ENCODE measurements at regions of chr1 and their contacts with region 1.

Region 1: DNA sequence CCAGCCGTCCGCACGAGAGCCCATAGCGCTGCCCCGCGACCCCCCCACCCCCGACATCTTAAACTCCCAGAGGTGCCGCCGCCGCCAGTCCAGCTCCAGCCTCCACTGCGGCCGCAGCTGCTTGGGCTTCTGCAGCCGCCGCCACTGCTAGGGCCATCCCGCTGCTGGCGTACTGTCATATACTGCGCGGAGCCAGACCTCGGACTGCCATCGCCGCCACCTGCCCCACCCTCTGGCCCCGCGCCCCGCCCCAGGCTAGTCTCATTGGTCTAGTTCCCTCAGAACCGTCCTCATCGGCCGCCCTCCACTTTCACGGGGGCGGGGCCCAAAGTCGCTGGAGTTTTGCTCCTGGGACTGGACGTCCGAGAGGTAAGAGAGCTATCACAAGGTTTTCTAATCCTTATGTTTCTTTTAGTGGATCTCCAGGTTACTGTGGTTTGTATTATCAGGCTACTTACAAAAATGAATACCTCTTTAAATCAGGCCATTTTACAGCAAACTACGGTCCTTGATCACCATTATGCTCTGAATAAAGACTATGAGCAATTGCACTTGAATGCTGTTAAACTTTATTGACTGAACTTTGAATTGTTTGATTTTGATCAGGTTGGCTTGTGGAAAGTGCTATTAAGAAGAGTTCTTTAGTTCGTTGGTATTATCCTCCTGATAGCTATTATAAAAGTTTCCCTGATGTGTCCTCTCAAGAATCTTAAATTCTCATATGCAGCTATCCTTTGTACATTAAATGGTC is 2.8 kb upstream of the CD1D start:
- DNase-seq: peak; percentile 65
- ATAC-seq: peak; percentile 69
- H3K4me3 ChIP-seq: peak overlapping the region; percentile 39 to 62 (median 50)
- H3K4me3 Mint-ChIP-seq: peak overlapping the region; percentile 82
- H3K27ac ChIP-seq: peak overlapping the region; percentile 22 to 53
- H3K27ac Mint-ChIP-seq: peak overlapping the region; percentile 86
- H3K4me1 ChIP-seq: peaks cover 58 to 72% of the 10 kb centered on the region in 2 donors
- H3K4me1 Mint-ChIP-seq: peaks cover 73% of the 10 kb centered on the region
- H3K27me3 ChIP-seq: no peaks in the 10 kb centered on the region
- H3K27me3 Mint-ChIP-seq: no peaks in the 10 kb centered on the region
- CTCF ChIP-seq: no peak

Region 2: DNA sequence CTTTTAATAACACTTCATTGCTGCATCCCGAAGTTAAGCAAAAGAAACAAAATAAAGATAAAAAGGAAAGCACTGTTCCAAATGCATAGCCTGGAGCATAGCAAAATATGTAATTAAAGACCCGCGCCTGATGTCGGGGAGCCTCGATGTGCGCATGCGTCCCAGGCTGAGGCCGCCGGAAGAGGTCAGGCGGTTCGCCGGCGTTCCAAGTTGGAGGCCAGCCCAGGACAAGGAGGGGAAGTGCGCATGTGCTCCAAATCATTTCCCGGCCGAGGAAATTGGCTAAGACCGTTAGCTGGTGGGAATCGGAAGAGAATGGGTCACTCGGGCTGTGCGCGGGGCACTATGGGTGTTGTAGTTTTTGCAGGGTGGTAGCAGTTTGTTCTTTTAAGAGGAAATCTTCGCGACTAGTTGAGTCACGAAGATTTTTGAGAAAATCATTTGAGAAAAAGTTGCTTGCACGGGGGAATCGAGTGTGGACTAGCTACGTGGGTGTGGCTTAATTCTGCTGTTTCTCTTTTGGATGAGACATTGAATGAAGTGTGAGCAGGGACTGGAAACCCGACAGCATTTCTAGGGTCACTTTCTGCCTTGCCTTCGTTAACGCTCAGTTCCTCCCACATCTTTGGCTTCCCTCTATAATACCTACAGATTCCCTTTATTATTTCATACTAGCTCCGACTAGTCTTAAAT is 28.2 kb before region 1 on chr1:
- CTCF ChIA-PET with region 1: no interaction called
- POLR2A ChIA-PET with region 1: no interaction called
- intact Hi-C with region 1: loop called (anchors 1 kb)
- DNase-seq: peak; percentile 82
- ATAC-seq: peak; percentile 73
- H3K4me3 ChIP-seq: peak overlapping the region; percentile 53 to 81 (median 76)
- H3K4me3 Mint-ChIP-seq: peak overlapping the region; percentile 99
- H3K27ac ChIP-seq: peak overlapping the region; percentile 77 to 85
- H3K27ac Mint-ChIP-seq: peak overlapping the region; percentile 98
- H3K4me1 ChIP-seq: peaks cover 43 to 49% of the 10 kb centered on the region in 2 donors
- H3K4me1 Mint-ChIP-seq: peaks cover 58% of the 10 kb centered on the region
- H3K27me3 ChIP-seq: no peaks in the 10 kb centered on the region
- H3K27me3 Mint-ChIP-seq: no peaks in the 10 kb centered on the region
- CTCF ChIP-seq: no peak

Region 3: DNA sequence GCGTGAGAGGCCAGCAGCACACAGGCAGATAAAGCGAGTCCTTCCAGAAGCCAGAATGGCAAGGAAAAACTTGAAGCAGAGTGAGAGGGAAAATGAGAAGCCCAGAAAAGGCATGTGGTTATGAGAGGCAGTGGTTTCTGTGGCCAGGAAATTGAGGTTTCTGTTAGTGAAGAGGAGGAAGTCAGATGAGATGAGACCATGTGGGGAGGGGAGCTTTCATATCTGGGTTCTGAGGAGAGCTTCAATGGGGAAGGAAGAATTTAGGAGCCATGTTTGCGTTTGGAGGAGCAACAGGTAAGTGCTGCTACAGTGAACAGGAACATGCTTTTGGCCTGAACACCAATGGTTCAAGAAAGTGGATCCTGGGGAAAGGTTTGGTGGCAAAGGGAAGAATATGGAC is 70.2 kb after region 1 on chr1:
- CTCF ChIA-PET with region 1: interaction called, 5 read pairs
- POLR2A ChIA-PET with region 1: no interaction called
- intact Hi-C with region 1: loop called (anchors 5 kb)
- DNase-seq: peak; percentile 88
- ATAC-seq: peak; percentile 84
- H3K4me3 ChIP-seq: peak overlapping the region in 3 of 5 experiments; percentile 16 to 32 (median 26)
- H3K4me3 Mint-ChIP-seq: peak overlapping the region; percentile 49
- H3K27ac ChIP-seq: peak overlapping the region; percentile 40 to 63
- H3K27ac Mint-ChIP-seq: peak overlapping the region; percentile 57
- H3K4me1 ChIP-seq: peaks cover 49 to 51% of the 10 kb centered on the region in 2 donors
- H3K4me1 Mint-ChIP-seq: peaks cover 48% of the 10 kb centered on the region
- H3K27me3 ChIP-seq: no peaks in the 10 kb centered on the region
- H3K27me3 Mint-ChIP-seq: no peaks in the 10 kb centered on the region
- CTCF ChIP-seq: no peak

Region 4: GRCh38 chr1:158329733-158330132 is 151.9 kb after region 1 on chr1:
- CTCF ChIA-PET with region 1: interaction called, 10 read pairs
- POLR2A ChIA-PET with region 1: no interaction called
- intact Hi-C with region 1: no loop called
- DNase-seq: peak; percentile 63
- ATAC-seq: no peak
- H3K4me3 ChIP-seq: no peak overlapping the region
- H3K4me3 Mint-ChIP-seq: no peak overlapping the region
- H3K27ac ChIP-seq: no peak overlapping the region
- H3K27ac Mint-ChIP-seq: no peak overlapping the region
- H3K4me1 ChIP-seq: peaks cover 43 to 55% of the 10 kb centered on the region in 2 donors
- H3K4me1 Mint-ChIP-seq: peaks cover 25% of the 10 kb centered on the region
- H3K27me3 ChIP-seq: no peaks in the 10 kb centered on the region
- H3K27me3 Mint-ChIP-seq: no peaks in the 10 kb centered on the region
- CTCF ChIP-seq: peak; percentile 42

Region 5: GRCh38 chr1:158371188-158371953 is 193.5 kb after region 1 on chr1:
- CTCF ChIA-PET with region 1: no interaction called
- POLR2A ChIA-PET with region 1: no interaction called
- intact Hi-C with region 1: no loop called
- DNase-seq: no peak
- ATAC-seq: peak; percentile 24
- H3K4me3 ChIP-seq: no peak overlapping the region
- H3K4me3 Mint-ChIP-seq: no peak overlapping the region
- H3K27ac ChIP-seq: no peak overlapping the region
- H3K27ac Mint-ChIP-seq: no peak overlapping the region
- H3K4me1 ChIP-seq: peaks cover 0 to 6% of the 10 kb centered on the region in 2 donors
- H3K4me1 Mint-ChIP-seq: peaks cover 5% of the 10 kb centered on the region
- H3K27me3 ChIP-seq: peaks cover 0 to 4% (median 0%) of the 10 kb centered on the region in 4 experiments
- H3K27me3 Mint-ChIP-seq: no peaks in the 10 kb centered on the region
- CTCF ChIP-seq: no peak

Measured in B cell (primary cell).